IMR-90 (cell line): ENCODE measurements at regions of chr3 and their contacts with region 1.

Region 1: DNA sequence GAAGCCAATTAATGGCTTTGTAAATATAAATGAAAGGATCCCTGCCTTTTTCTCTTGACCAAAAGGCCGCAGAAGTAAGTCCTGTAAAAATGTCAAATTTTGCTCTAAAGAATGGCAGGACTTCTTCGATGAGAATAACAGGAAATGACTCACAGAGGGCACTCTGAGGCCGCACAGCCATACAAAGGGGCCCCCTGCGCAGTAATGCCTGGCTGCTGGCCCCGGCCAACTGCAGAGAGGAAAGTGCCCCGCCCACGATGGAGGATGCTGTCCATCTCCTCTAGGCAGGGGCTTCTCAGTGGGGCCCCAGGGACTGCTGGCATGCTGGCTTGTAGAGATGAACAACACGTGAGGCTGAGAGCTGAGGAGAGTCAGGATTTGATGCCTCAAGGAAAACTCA is 18.1 kb upstream of the SCN10A start:
- DNase-seq: peak; percentile 81
- ATAC-seq: peak; percentile 74
- H3K4me3 ChIP-seq: no peak overlapping the region
- H3K27ac ChIP-seq: peak overlapping the region; percentile 59
- H3K4me1 ChIP-seq: peaks cover 29% of the 10 kb centered on the region
- H3K27me3 ChIP-seq: no peaks in the 10 kb centered on the region
- CTCF ChIP-seq: no peak
- POLR2A ChIP-seq: no peak
- RAD21 ChIP-seq: no peak

Region 2: GRCh38 chr3:38738630-38739395 is 95.3 kb before region 1 on chr3:
- CTCF ChIA-PET with region 1: no interaction called
- POLR2A ChIA-PET with region 1: no interaction called
- dilution Hi-C with region 1: no loop called
- in situ Hi-C with region 1: loop called (anchors 10 kb)
- intact Hi-C with region 1: no loop called
- DNase-seq: peak; percentile 28
- ATAC-seq: peak; percentile 49; the same call in 1 of the 2 replicates
- H3K4me3 ChIP-seq: no peak overlapping the region
- H3K27ac ChIP-seq: no peak overlapping the region
- H3K4me1 ChIP-seq: no peaks in the 10 kb centered on the region
- H3K27me3 ChIP-seq: 0 out of 2 replicates have a peak, but pooled peaks cover 2% of the 10 kb centered on the region
- CTCF ChIP-seq: peak; percentile 59
- POLR2A ChIP-seq: no peak
- RAD21 ChIP-seq: peak; percentile 62